Heart right ventricle (tissue), 16 donors: ENCODE measurements at regions of chr4 and their contacts with region 1.

Region 1: DNA sequence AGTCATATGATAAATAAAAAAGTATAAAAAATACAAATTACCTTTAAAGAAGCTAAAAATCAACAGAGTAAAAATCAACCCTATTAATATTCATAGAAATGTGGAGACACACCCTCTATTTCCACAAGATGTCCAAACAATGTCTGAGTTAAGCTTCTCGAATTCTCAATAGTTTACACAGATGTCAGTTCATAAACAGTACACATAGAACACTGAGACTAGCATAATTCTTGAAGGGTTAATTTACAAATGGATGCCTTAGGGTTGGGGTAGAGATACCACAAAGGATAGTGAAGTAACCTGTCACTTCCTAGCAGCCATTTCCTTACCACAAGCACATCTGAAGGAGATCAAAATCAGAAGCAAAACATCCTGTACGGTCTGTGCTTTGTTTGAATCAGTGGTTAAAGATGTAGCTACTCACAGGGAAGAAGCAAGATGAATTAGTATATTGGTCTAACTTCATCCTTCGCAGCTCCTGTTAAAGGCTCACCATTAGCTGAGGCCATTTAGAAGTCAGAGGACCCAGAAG is 2393.9 kb downstream of the ARAP2 start:
- DNase-seq: no peak
- ATAC-seq: no peak
- H3K4me3 ChIP-seq: no peak overlapping the region
- H3K27ac ChIP-seq: no peak overlapping the region
- H3K4me1 ChIP-seq: no peaks in the 10 kb centered on the region
- H3K27me3 ChIP-seq: no peaks in the 10 kb centered on the region
- CTCF ChIP-seq: no peak

Region 2: DNA sequence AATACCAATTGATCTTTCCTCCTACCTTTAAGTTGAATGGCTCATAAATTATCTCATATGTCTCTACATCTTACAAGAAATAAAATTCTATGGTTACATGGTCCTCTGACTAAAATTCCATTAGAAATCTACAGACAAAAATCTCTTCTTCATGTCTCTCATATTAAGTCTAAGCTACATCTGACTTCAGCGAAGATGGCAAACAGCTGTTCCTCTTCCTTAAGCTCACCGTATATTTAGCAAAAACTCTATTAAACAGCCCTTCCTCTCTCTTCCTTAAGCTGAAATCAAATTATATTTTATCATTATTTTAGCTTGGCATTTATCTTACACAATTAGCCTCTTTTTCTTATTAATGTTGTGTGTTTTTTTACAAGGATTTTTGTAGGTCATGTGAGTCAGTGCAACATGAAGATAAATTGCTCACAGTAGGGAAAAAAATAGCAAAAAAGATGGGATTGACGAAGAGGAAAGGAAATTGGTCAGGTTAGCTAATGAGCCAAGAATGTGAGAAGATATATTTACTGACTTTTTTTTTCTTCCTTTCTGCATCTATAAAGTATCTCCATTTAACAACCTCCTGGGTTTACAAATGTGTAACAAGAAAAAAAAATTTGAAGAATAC is 18.9 kb before region 1 on chr4:
- intact Hi-C with region 1: loop called in 1 of 10 experiments (anchors 1 kb)
- DNase-seq: no peak
- ATAC-seq: no peak
- H3K4me3 ChIP-seq: no peak overlapping the region
- H3K27ac ChIP-seq: no peak overlapping the region
- H3K4me1 ChIP-seq: no peaks in the 10 kb centered on the region
- H3K27me3 ChIP-seq: no peaks in the 10 kb centered on the region
- CTCF ChIP-seq: no peak